Natural killer cell (primary cell): ENCODE measurements at regions of chr16 and their contacts with region 1.

Region 1: DNA sequence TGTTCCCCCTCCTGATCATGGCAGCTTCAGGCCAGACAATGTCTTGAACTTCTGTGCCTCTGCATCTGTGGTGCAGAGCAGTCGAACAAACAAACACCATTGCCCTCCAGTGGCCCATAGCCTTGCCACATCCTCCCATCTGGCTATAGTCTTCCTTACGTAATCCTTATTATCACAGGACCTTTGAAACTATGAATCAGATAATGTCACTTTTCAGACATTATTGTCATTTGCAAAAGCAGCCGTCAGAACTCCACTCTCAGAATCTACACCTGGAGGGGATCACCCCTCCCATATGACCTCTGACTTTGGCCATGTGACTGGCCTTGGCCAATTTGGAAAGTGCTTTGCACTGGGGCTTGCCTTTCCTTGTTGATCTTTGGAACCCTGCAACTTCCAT is 387.3 kb downstream of the MAF start:
- DNase-seq: no peak
- ATAC-seq: peak; percentile 66 to 86 (median 81)
- H3K4me3 ChIP-seq: no peak overlapping the region
- H3K4me3 Mint-ChIP-seq: no peak overlapping the region
- H3K27ac ChIP-seq: no peak overlapping the region
- H3K27ac Mint-ChIP-seq: peak overlapping the region in 1 of 2 donors; percentile 2
- H3K4me1 ChIP-seq: peaks cover 6% of the 10 kb centered on the region
- H3K4me1 Mint-ChIP-seq: peaks cover 17 to 31% of the 10 kb centered on the region in 2 donors
- H3K27me3 ChIP-seq: no peaks in the 10 kb centered on the region
- H3K27me3 Mint-ChIP-seq: no peaks in the 10 kb centered on the region
- CTCF ChIP-seq: peak; percentile 47

Region 2: GRCh38 chr16:78503602-78504001 is 709.6 kb before region 1 on chr16:
- intact Hi-C with region 1: loop called (anchors 5 kb)
- DNase-seq: peak in 1 of 2 donors; percentile 76
- ATAC-seq: peak in 2 of 3 donors; percentile 52 to 58
- H3K4me3 ChIP-seq: no peak overlapping the region
- H3K4me3 Mint-ChIP-seq: no peak overlapping the region
- H3K27ac ChIP-seq: no peak overlapping the region
- H3K27ac Mint-ChIP-seq: no peak overlapping the region
- H3K4me1 ChIP-seq: no peaks in the 10 kb centered on the region
- H3K4me1 Mint-ChIP-seq: no peaks in the 10 kb centered on the region
- H3K27me3 ChIP-seq: no peaks in the 10 kb centered on the region
- H3K27me3 Mint-ChIP-seq: no peaks in the 10 kb centered on the region
- CTCF ChIP-seq: peak; percentile 86

Region 3: GRCh38 chr16:78705694-78706093 is 507.5 kb before region 1 on chr16:
- intact Hi-C with region 1: loop called (anchors 10 kb)
- DNase-seq: peak in 1 of 2 donors; percentile 67
- ATAC-seq: peak; percentile 49 to 53 (median 52)
- H3K4me3 ChIP-seq: no peak overlapping the region
- H3K4me3 Mint-ChIP-seq: no peak overlapping the region
- H3K27ac ChIP-seq: no peak overlapping the region
- H3K27ac Mint-ChIP-seq: no peak overlapping the region
- H3K4me1 ChIP-seq: no peaks in the 10 kb centered on the region
- H3K4me1 Mint-ChIP-seq: peaks cover 5 to 8% of the 10 kb centered on the region in 2 donors
- H3K27me3 ChIP-seq: no peaks in the 10 kb centered on the region
- H3K27me3 Mint-ChIP-seq: peaks cover 3 to 10% of the 10 kb centered on the region in 2 donors
- CTCF ChIP-seq: peak; percentile 59

Region 4: DNA sequence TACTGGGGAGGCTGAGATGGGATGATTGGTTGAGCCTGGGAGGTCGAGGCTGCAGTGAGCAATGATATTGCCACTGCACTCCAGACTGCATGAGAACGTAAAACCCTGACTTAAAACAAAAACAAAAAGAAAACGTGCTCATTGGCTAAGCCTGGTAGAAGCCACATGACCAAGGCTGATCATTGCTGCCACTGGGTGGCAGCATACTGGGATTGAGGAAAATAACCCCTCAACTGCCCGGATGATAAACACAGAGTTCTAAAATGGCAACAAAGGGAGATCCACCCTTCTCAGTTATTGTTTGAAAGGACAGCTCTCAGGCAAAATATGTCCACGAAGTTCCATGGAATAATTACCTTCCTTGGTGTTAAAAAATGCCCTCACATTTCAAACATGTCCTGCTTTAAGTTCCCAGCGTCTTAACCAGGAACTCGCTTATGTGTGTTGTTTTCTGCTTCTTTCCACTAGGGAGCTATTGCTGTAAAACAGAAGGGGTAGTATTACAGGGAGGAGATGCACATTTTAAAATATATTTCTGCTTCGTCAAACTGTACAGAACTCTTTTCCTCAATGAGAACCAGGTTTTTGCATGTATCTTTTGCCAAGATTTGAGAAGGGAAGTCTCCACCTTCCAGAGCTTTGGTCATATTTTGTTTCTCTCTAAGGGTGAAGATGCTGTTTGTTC is 288.0 kb before region 1 on chr16:
- intact Hi-C with region 1: loop called (anchors 1 kb)
- DNase-seq: peak in 1 of 2 donors; percentile 54
- ATAC-seq: peak; percentile 35 to 75 (median 38)
- H3K4me3 ChIP-seq: no peak overlapping the region
- H3K4me3 Mint-ChIP-seq: no peak overlapping the region
- H3K27ac ChIP-seq: no peak overlapping the region
- H3K27ac Mint-ChIP-seq: no peak overlapping the region
- H3K4me1 ChIP-seq: no peaks in the 10 kb centered on the region
- H3K4me1 Mint-ChIP-seq: peaks cover 5 to 11% of the 10 kb centered on the region in 2 donors
- H3K27me3 ChIP-seq: no peaks in the 10 kb centered on the region
- H3K27me3 Mint-ChIP-seq: peaks cover 3 to 11% of the 10 kb centered on the region in 2 donors
- CTCF ChIP-seq: peak; percentile 38

Region 5: DNA sequence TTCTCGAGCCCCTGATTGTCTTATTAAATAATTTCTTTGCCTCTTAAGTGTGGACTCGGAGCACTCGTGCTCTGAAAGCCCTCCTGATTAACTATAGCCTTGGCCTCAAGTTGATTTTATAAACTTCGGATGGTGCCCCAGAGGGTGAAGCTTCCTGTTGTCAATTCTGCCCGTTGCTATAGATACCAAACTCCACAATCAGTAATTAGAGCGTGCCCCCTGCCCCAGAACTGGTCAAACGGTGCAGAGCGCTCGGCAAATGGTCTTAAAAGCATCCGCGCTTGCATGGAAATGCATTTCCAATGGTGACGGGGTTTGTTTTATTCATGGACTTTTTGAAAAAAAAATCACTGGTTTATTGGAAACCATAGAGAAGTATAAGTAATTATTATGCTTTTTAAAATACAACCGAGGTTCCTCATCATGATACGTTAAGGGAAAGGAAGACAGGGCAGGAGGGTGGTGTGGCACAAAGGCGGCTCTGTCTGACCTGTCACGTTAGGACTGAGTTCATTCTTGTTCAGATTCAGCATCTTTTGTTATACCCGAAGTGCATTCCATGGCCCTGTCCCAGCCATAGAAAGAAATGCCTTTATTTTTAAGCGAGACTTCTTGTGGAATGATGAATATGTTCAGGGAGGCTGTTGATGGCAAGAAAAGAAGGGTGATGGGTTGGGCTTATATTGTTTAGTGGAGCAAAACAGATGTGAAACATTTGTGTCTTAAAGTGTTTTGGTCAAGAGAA is 89.0 kb before region 1 on chr16:
- intact Hi-C with region 1: no loop called
- DNase-seq: no peak
- ATAC-seq: no peak
- H3K4me3 ChIP-seq: no peak overlapping the region
- H3K4me3 Mint-ChIP-seq: no peak overlapping the region
- H3K27ac ChIP-seq: no peak overlapping the region
- H3K27ac Mint-ChIP-seq: no peak overlapping the region
- H3K4me1 ChIP-seq: no peaks in the 10 kb centered on the region
- H3K4me1 Mint-ChIP-seq: peaks cover 0 to 7% of the 10 kb centered on the region in 2 donors
- H3K27me3 ChIP-seq: no peaks in the 10 kb centered on the region
- H3K27me3 Mint-ChIP-seq: no peaks in the 10 kb centered on the region
- CTCF ChIP-seq: no peak